Dorsolateral prefrontal cortex (tissue), 120 donors: ENCODE measurements at regions of chr7 and their contacts with region 1.

Region 1: DNA sequence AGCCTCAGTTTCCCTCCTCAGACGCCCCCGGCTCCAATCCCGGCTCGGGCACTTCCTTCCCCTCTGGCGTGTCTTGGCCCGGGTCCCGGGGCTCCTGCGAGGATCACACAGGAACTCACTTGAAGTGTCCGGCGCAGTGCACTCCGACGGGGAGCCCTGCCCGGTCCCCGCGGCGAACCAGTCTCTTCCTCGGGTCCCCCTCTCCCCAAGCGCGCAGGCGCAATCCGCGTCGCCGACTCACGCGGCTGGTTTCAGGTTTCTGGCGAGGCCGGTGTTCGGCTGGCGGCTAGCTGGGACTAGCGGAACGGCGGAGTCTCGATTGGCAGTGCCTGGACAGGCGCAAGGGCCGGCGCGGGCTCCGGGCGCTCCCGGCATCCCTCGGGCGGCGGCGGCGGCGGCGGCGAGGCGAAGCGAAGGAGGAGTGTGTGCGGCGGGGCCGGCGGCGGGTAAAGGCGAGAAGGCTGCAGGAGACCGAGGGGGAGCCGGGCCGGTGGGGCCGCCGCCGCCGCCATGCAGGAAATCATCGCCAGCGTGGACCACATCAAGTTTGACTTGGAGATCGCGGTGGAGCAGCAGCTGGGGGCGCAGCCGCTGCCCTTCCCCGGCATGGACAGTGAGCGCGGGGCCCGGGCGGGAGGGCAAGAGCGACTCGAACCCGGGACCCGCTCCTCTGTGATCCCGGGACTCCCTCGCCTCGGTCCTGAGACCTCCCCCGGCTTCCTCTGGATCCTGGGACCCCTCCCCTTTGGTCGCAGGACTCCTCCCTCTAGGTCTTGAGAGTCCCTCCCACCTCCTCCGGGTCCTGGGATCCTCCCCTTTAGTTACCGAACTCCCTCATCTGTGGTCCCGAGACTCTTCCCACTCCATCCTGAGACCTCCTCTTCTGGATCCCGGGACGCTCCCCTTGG is at the starts of genes CPSF4 and PTCD1:
- DNase-seq: peak; percentile 88 to 98 (median 95)
- H3K4me3 ChIP-seq: peak within 1 kb of the TSS; percentile 62 to 100 (median 95)
- H3K27ac ChIP-seq: peak within 1 kb of the TSS in 54 of 59 donors; percentile 19 to 93 (median 80)
- H3K27me3 ChIP-seq: no peaks in the 10 kb centered on the region
- CTCF ChIP-seq: peak in 28 of 56 donors; percentile 12 to 50 (median 30)
- total RNA-seq, gene CPSF4: 31.8 to 83.9 (median 47.3) TPM
- total RNA-seq, gene PTCD1: 3.2 to 13.4 (median 6.3) TPM

Region 2: GRCh38 chr7:99465421-99465768 is 26.6 kb after region 1 on chr7:
- intact Hi-C with region 1: loop called in 1 of 2 experiments (anchors 2 kb)
- DNase-seq: no peak
- H3K4me3 ChIP-seq: peak overlapping the region; percentile 68 to 100 (median 91)
- H3K27ac ChIP-seq: peak overlapping the region in 57 of 59 donors; percentile 61 to 99 (median 94)
- H3K27me3 ChIP-seq: no peaks in the 10 kb centered on the region
- CTCF ChIP-seq: no peak